Gastrocnemius medialis (tissue), 4 donors: ENCODE measurements at regions of chr17 and their contacts with region 1.

Region 1: DNA sequence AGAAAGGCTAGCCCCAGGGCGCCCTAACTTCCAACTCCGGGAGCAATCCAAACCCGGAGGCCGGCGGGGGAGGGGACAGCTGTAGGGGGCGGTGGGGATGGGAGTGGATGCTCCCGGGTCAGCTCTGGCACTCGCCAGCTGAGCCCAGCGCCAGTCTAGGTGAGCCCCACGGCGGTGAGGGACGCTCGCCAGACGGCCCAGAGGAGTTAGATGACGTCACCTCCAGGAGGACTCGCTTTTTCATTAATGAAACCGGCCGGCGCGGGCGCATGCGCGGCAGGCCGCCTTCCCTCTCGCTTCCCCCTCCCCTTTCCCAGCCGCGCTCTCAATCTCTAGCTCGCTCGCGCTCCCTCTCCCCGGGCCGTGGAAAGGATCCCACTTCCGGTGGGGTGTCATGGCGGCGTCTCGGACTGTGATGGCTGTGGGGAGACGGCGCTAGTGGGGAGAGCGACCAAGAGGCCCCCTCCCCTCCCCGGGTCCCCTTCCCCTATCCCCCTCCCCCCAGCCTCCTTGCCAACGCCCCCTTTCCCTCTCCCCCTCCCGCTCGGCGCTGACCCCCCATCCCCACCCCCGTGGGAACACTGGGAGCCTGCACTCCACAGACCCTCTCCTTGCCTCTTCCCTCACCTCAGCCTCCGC is at the start of gene NF1:
- DNase-seq: peak; percentile 87 to 94
- ATAC-seq: peak; percentile 97 to 98
- H3K4me3 ChIP-seq: peak within 1 kb of the TSS; percentile 96 to 100 (median 96)
- H3K27ac ChIP-seq: peak within 1 kb of the TSS; percentile 90 to 98 (median 98)
- H3K4me1 ChIP-seq: peaks cover 7 to 9% of the 10 kb centered on the region in 2 donors
- H3K27me3 ChIP-seq: no peaks in the 10 kb centered on the region
- CTCF ChIP-seq: no peak
- POLR2A ChIP-seq: peak; percentile 53 to 61
- total RNA-seq, gene NF1: 23.6 to 47.3 (median 32.0) TPM

Region 2: GRCh38 chr17:30824356-30825145 is 270.2 kb before region 1 on chr17 and contains the start of gene CRLF3:
- in situ Hi-C with region 1: no loop called
- intact Hi-C with region 1: loop called (anchors 10 kb)
- DNase-seq: peak; percentile 73 to 86
- ATAC-seq: peak; percentile 88 to 91
- H3K4me3 ChIP-seq: peak within 1 kb of the TSS; percentile 94 to 98 (median 94)
- H3K27ac ChIP-seq: peak within 1 kb of the TSS; percentile 75 to 85 (median 81)
- H3K4me1 ChIP-seq: peaks cover 23 to 26% of the 10 kb centered on the region in 2 donors
- H3K27me3 ChIP-seq: no peaks in the 10 kb centered on the region
- CTCF ChIP-seq: peak; percentile 33 to 78 (median 55)
- POLR2A ChIP-seq: peak; percentile 60 to 74
- total RNA-seq, gene CRLF3: 3.5 to 6.4 (median 5.0) TPM

Region 3: GRCh38 chr17:30970831-30971567 is 123.7 kb before region 1 on chr17 and contains the start of gene RNF135:
- in situ Hi-C with region 1: no loop called
- intact Hi-C with region 1: no loop called
- DNase-seq: peak; percentile 67 to 73
- ATAC-seq: peak; percentile 88 to 92
- H3K4me3 ChIP-seq: peak within 1 kb of the TSS; percentile 51 to 76 (median 68)
- H3K27ac ChIP-seq: peak within 1 kb of the TSS; percentile 69 to 88 (median 84)
- H3K4me1 ChIP-seq: no peaks in the 10 kb centered on the region
- H3K27me3 ChIP-seq: peaks cover 0 to 6% (median 0%) of the 10 kb centered on the region in 3 donors
- CTCF ChIP-seq: peak in 4 of 5 experiments; percentile 27 to 62 (median 42)
- POLR2A ChIP-seq: peak; percentile 43 to 59
- total RNA-seq, gene RNF135: 4.4 to 9.3 (median 6.5) TPM

Region 4: GRCh38 chr17:31052187-31052889 is 42.4 kb before region 1 on chr17:
- in situ Hi-C with region 1: no loop called
- intact Hi-C with region 1: no loop called
- DNase-seq: peak; percentile 6 to 34
- ATAC-seq: peak; percentile 16 to 60
- H3K4me3 ChIP-seq: no peak overlapping the region
- H3K27ac ChIP-seq: no peak overlapping the region
- H3K4me1 ChIP-seq: no peaks in the 10 kb centered on the region
- H3K27me3 ChIP-seq: no peaks in the 10 kb centered on the region
- CTCF ChIP-seq: no peak
- POLR2A ChIP-seq: no peak